ENCODE measurements at regions of chr1 and their contacts with region 1.

Region 1: DNA sequence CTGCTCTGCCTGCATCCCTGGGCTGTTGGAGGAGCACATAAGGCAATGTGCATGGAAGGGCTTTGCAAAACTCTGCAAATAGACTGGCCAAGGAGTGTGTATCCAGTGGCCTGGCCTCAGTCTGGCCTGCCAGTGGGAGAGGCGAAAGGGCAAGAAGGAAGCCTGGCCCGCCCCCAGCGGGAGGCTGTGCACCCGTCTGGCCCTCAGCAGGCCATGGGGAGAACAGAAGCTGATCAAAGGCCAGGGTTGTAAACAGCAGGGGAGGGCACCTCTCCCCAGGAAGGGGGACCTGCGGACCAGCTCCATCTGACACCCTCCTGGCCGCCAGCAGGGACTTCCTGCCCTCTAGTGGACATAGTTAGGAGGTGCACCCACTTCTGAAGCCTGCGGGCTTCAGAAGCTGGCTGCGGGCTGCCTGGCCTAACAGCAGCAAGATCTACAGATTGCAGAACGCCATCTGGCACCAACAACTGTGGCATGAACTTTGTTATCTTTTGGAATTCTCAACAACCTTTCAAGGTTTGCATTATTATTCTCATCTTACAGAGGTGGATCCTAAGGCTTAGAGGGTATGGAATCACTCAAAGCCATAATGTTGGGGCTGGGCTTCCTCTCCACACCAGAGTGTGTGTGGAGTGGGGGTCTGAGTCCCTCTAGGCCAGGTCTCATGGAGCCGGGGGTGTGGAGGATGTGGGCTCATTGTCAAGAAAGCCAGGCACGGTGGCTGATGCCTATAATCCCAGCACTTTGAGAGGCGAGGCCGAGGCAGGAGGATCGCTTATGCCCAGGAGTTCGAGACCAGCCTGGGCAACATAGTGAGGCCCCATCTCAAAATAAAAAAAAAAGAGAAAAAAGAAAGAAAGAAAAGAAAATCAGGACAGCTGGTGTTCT is 18.9 kb upstream of the CDK18 start:
- DNase-seq: peak in 1 of 2 donors; percentile 70
- H3K4me3 ChIP-seq: no peak overlapping the region
- H3K27ac ChIP-seq: no peak overlapping the region
- H3K4me1 ChIP-seq: no peaks in the 10 kb centered on the region
- H3K27me3 ChIP-seq: no peaks in the 10 kb centered on the region
- CTCF ChIP-seq: peak; percentile 84 to 95 (median 91)

Region 2: DNA sequence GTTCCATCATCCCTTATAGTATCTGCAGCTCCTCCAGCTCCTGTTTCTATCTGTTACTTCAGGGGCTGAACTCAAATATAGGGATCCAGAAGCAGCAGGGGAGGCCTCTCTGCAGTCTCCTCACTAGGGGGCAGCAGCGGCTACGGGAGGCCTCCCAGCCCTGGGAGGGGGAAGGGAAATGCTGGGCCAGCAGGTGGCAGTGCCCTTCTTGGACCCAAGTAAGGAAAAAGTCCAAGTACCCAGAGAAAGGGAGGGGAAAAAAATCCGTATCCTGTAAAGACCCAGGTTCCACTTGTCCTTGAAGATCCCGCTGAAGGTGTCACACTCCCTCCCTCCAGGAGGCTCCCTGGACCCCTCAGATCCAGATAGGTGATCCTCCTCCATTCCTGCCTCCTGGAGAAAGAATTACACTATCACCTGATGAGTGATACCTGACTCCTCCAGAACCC is 149.9 kb before region 1 on chr1:
- intact Hi-C with region 1: loop called (anchors 1 kb)
- DNase-seq: peak in 1 of 2 donors; percentile 82
- H3K4me3 ChIP-seq: no peak overlapping the region
- H3K27ac ChIP-seq: no peak overlapping the region
- H3K4me1 ChIP-seq: no peaks in the 10 kb centered on the region
- H3K27me3 ChIP-seq: no peaks in the 10 kb centered on the region
- CTCF ChIP-seq: peak; percentile 87 to 97 (median 93)

Region 3: GRCh38 chr1:205354259-205354904 is 131.2 kb before region 1 on chr1:
- intact Hi-C with region 1: loop called (anchors 1 kb)
- DNase-seq: peak in 1 of 2 donors; percentile 78
- H3K4me3 ChIP-seq: no peak overlapping the region
- H3K27ac ChIP-seq: no peak overlapping the region
- H3K4me1 ChIP-seq: no peaks in the 10 kb centered on the region
- H3K27me3 ChIP-seq: no peaks in the 10 kb centered on the region
- CTCF ChIP-seq: peak; percentile 65 to 84 (median 83)

Region 4: GRCh38 chr1:205523891-205524793 is 38.6 kb after region 1 on chr1:
- intact Hi-C with region 1: loop called (anchors 1 kb)
- DNase-seq: peak in 1 of 2 donors; percentile 79
- H3K4me3 ChIP-seq: no peak overlapping the region
- H3K27ac ChIP-seq: no peak overlapping the region
- H3K4me1 ChIP-seq: peaks cover under 1 to 5% of the 10 kb centered on the region in 2 donors
- H3K27me3 ChIP-seq: no peaks in the 10 kb centered on the region
- CTCF ChIP-seq: peak; percentile 61 to 78 (median 72)

Region 5: DNA sequence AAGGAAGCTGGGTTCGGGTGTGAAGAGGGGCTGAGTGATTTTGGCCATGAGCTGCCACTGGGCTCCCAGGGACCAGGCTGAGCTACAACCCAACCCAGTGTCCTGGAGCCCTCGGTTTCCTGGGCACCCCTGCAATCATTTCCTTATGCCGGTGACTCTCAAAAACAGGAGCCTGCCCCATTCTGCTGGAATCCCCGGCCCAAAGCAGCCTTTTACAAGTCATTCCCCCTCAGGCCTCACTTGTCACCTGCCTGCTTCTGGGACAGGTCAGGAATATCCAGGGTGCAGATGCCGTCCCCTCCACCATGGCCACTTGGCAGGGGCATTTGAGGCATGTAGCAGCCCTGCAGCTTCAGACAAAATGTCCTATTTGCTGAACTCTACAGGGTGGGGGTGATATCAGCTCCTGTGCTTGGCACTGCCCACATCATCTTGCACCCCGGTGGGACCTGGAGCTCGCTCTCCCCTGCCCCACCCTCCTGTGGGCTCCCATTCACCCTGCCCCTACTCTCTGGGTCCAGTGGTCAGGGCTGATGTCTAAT is 48.9 kb after region 1 on chr1:
- intact Hi-C with region 1: no loop called
- DNase-seq: peak in 1 of 2 donors; percentile 53
- H3K4me3 ChIP-seq: no peak overlapping the region
- H3K27ac ChIP-seq: no peak overlapping the region
- H3K4me1 ChIP-seq: no peaks in the 10 kb centered on the region
- H3K27me3 ChIP-seq: no peaks in the 10 kb centered on the region
- CTCF ChIP-seq: no peak

Region 6: DNA sequence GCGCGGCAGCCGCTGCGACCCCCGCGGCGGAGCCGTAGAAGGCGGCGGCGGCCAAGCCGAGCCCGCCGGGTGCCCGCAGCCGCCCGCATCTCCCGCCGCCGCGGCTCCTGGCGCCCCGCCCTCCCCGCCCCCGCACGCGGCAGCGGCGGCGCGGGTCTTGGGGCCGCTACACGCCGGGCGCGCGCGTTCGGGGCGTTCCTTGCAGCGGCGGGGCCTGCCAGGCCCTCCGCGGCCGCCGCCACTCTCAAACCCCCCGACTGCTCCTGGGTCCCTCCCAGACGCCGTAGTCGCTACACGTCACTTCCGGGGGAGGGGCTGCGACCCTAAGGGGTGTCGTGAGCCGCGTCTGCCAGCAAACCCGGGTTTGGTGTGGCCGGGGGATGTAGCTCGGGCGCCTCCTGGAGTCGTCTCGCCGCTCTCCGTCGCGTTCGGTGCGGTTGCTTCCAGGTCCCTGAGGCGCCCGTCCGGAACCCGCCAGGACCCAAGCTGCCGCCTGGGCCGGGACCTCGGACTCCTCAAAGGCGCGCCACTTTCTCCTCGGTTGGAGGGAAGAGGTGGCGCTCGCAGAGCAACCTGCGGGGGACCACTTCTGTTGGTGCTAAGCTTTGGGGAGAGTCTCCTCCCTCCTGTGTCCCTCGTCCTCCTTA is 146.3 kb after region 1 on chr1 and contains the start of gene ELK4:
- intact Hi-C with region 1: no loop called
- DNase-seq: peak; percentile 90 to 99
- H3K4me3 ChIP-seq: peak within 1 kb of the TSS; percentile 79 to 90
- H3K27ac ChIP-seq: peak within 1 kb of the TSS; percentile 97 to 98
- H3K4me1 ChIP-seq: peaks cover 0 to 21% of the 10 kb centered on the region in 2 donors
- H3K27me3 ChIP-seq: no peaks in the 10 kb centered on the region
- CTCF ChIP-seq: peak; percentile 72 to 91 (median 77)
- total RNA-seq, gene ELK4: 23.7 TPM